PC-9 (cell line): ENCODE measurements at regions of chr5 and their contacts with region 1.

Region 1: DNA sequence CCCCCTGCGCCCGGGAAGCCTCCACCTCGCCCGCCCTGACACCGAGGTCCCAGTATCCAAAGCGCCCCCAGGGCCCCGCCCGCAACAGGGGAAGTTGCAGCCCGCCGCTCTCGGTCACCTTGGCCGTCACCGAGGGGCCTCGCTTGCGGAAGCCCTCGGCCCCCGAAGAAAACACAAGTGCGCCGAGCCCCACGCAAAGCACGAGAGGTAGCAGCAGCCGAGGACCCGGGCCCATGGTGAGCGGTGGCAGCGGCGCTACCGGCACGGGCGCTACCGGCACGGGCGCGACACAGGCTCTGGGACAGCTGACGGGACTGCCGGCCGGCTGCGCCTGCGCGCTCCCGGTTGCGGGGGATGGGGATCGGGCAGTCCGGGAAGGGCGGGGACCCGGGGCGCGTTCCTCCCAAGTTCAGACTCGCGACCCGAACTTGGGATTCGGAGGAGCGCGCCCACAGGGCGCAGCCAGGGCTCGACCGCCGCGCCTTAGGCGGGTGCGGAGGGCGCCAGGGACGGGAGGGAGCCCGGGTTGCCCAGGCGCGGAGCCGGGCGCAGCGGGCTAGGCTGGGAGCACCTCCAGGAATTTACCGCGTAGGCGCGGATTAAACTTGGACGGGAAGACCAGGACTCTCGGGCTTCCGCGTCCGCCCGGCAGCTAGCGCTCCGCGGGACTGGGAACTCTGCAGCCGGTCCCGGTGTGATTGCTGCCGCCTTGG is at the start of gene PPIC:
- DNase-seq: peak; percentile 54 to 90
- H3K4me3 ChIP-seq: peak within 1 kb of the TSS; percentile 98
- H3K27ac ChIP-seq: peak within 1 kb of the TSS; percentile 36
- H3K4me1 ChIP-seq: peaks cover 5% of the 10 kb centered on the region
- H3K27me3 ChIP-seq: no peaks in the 10 kb centered on the region
- CTCF ChIP-seq: no peak
- total RNA-seq, gene PPIC: 22.3 and 27.4 TPM in 2 replicates

Region 2: DNA sequence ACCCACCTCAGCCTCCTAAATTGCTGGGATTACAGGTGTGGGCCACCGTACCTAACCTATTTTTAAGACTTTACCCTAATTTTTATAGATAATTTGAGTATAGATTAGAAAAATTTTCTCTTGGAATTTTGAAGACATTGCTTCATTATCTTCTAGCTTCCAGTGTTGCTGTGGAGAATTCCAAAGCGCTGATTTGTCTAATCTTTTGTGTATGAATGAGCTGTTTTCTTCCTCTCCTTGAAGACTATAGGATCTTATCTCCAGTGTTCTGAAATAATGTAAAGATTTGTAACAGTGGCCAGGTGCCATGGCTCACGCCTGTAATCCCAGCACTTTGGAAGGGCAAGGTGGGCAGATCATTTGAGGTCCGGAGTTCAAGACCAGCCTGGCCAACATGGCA is 196.8 kb before region 1 on chr5:
- CTCF ChIA-PET with region 1: no interaction called
- POLR2A ChIA-PET with region 1: no interaction called
- intact Hi-C with region 1: no loop called
- DNase-seq: no peak
- H3K4me3 ChIP-seq: no peak overlapping the region
- H3K27ac ChIP-seq: no peak overlapping the region
- H3K4me1 ChIP-seq: peaks cover 13% of the 10 kb centered on the region
- H3K27me3 ChIP-seq: no peaks in the 10 kb centered on the region
- CTCF ChIP-seq: no peak

Region 3: GRCh38 chr5:122907238-122907637 is 129.3 kb before region 1 on chr5:
- CTCF ChIA-PET with region 1: no interaction called
- POLR2A ChIA-PET with region 1: no interaction called
- intact Hi-C with region 1: loop called (anchors 10 kb)
- DNase-seq: peak; percentile 47 to 72
- H3K4me3 ChIP-seq: no peak overlapping the region
- H3K27ac ChIP-seq: peak overlapping the region; percentile 40
- H3K4me1 ChIP-seq: peaks cover 15% of the 10 kb centered on the region
- H3K27me3 ChIP-seq: no peaks in the 10 kb centered on the region
- CTCF ChIP-seq: no peak

Region 4: DNA sequence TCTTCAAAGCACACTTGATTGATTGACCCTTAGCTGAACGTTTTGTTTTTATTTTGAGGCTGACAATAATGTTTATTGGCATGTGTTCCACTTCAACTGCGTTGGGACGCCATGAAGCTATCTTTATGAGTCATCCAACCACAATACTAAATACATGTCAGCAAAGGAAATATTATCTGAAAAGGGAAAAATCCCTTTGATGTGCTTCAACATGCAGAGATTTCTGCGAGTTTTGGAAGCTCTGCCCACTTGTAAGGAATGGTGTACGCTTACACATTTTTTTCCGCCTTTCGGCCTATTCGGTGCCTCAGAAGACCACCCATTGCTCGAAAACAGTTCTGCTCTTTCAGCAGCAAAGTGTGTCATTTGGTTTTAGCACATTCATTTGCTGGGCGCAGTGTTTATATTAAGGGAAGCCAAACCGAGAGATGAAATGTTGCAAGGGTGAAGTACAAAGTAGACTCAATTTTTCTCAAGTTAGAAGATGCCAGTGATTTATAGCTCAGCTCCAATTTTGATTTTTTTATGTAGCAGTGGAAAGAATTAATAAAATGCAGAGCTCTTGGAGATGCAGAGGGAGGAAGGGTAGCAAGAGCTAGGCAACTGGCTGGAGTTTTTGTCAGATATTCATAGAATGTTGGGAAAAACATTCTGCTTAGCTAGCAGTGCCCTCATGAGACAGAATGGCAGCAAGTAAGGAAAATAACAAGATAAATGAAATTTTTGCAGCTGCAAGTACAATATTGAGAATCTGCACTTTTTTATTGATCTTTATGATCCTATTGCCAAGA is 121.4 kb after region 1 on chr5:
- CTCF ChIA-PET with region 1: no interaction called
- POLR2A ChIA-PET with region 1: no interaction called
- intact Hi-C with region 1: loop called (anchors 5 kb)
- DNase-seq: no peak
- H3K4me3 ChIP-seq: no peak overlapping the region
- H3K27ac ChIP-seq: no peak overlapping the region
- H3K4me1 ChIP-seq: peaks cover 24% of the 10 kb centered on the region; the same call in 1 of the 2 replicates
- H3K27me3 ChIP-seq: no peaks in the 10 kb centered on the region
- CTCF ChIP-seq: 0 out of 2 replicates have a peak, but pooled peaks have one; percentile 21